CD8-positive, alpha-beta memory T cell (primary cell): ENCODE measurements at regions of chr5 and their contacts with region 1.

Region 1: GRCh38 chr5:137743031-137743640 is 7.2 kb upstream of the KLHL3 start:
- DNase-seq: peak; percentile 35 to 69 (median 53)
- H3K4me3 ChIP-seq: no peak overlapping the region
- H3K4me3 Mint-ChIP-seq: no peak overlapping the region
- H3K27ac ChIP-seq: no peak overlapping the region
- H3K27ac Mint-ChIP-seq: peak overlapping the region in 1 of 8 donors; percentile 24
- H3K4me1 ChIP-seq: peaks cover 6% of the 10 kb centered on the region
- H3K4me1 Mint-ChIP-seq: peaks cover 4 to 9% (median 9%) of the 10 kb centered on the region in 3 donors
- H3K27me3 ChIP-seq: no peaks in the 10 kb centered on the region
- H3K27me3 Mint-ChIP-seq: no peaks in the 10 kb centered on the region

Region 2: DNA sequence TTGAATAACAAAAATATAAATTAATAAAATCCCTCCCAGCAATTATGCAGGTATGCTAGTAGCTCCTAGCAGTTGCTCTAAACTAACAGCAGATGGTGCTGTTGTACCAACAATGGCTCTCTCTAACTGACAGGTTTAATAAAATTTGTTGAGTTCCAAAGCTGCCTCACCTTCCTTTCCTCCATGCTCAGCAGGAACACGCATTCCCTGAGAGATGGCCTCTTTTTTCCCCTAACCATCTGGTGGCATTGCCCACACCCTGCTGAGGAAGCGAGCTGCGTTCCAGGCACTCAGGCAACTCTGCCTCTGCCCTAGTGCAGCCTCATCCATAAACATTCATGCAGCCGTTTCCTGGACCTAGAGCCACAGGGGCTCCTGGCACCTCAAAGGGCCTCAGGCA is 113.5 kb before region 1 on chr5:
- CTCF ChIA-PET with region 1: interaction called, 65 read pairs
- POLR2A ChIA-PET with region 1: interaction called, 3 read pairs
- DNase-seq: peak in 2 of 5 donors; percentile 32 to 44
- H3K4me3 ChIP-seq: no peak overlapping the region
- H3K4me3 Mint-ChIP-seq: no peak overlapping the region
- H3K27ac ChIP-seq: no peak overlapping the region
- H3K27ac Mint-ChIP-seq: peak overlapping the region in 1 of 8 donors; percentile 39
- H3K4me1 ChIP-seq: no peaks in the 10 kb centered on the region
- H3K4me1 Mint-ChIP-seq: no peaks in the 10 kb centered on the region
- H3K27me3 ChIP-seq: no peaks in the 10 kb centered on the region
- H3K27me3 Mint-ChIP-seq: no peaks in the 10 kb centered on the region

Region 3: GRCh38 chr5:137641148-137641547 is 102.0 kb before region 1 on chr5:
- CTCF ChIA-PET with region 1: interaction called, 5 read pairs
- POLR2A ChIA-PET with region 1: interaction called, 11 read pairs
- DNase-seq: no peak
- H3K4me3 ChIP-seq: no peak overlapping the region
- H3K4me3 Mint-ChIP-seq: no peak overlapping the region
- H3K27ac ChIP-seq: no peak overlapping the region
- H3K27ac Mint-ChIP-seq: peak overlapping the region in 1 of 8 donors; percentile 87
- H3K4me1 ChIP-seq: no peaks in the 10 kb centered on the region
- H3K4me1 Mint-ChIP-seq: no peaks in the 10 kb centered on the region
- H3K27me3 ChIP-seq: no peaks in the 10 kb centered on the region
- H3K27me3 Mint-ChIP-seq: no peaks in the 10 kb centered on the region

Region 4: DNA sequence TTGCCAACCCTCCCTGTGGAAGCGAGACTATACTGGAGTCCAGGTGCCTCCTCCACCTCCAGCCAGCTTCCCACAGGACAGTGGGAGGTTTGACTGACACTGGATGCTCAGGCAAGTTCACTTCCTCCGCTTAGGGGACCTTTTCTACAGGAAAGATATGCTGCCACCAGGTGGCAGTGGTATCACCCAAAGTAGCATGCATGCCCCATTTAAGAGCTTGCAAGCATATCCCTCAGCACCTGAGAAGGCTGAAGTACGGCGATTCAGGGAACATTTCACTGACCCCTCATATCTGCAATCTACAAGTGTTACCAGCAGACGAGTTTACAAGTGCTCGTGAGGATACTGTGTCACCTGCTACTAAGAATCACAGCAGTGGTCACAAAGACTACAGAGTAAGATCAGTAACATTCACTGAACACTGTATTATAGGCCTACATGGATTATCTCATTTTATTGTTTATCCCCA is 82.8 kb before region 1 on chr5:
- CTCF ChIA-PET with region 1: interaction called, 170 read pairs
- POLR2A ChIA-PET with region 1: interaction called, 6 read pairs
- DNase-seq: peak; percentile 46 to 76 (median 47)
- H3K4me3 ChIP-seq: no peak overlapping the region
- H3K4me3 Mint-ChIP-seq: no peak overlapping the region
- H3K27ac ChIP-seq: no peak overlapping the region
- H3K27ac Mint-ChIP-seq: no peak overlapping the region
- H3K4me1 ChIP-seq: no peaks in the 10 kb centered on the region
- H3K4me1 Mint-ChIP-seq: peaks cover 3 to 7% (median 7%) of the 10 kb centered on the region in 3 donors
- H3K27me3 ChIP-seq: no peaks in the 10 kb centered on the region
- H3K27me3 Mint-ChIP-seq: no peaks in the 10 kb centered on the region

Region 5: DNA sequence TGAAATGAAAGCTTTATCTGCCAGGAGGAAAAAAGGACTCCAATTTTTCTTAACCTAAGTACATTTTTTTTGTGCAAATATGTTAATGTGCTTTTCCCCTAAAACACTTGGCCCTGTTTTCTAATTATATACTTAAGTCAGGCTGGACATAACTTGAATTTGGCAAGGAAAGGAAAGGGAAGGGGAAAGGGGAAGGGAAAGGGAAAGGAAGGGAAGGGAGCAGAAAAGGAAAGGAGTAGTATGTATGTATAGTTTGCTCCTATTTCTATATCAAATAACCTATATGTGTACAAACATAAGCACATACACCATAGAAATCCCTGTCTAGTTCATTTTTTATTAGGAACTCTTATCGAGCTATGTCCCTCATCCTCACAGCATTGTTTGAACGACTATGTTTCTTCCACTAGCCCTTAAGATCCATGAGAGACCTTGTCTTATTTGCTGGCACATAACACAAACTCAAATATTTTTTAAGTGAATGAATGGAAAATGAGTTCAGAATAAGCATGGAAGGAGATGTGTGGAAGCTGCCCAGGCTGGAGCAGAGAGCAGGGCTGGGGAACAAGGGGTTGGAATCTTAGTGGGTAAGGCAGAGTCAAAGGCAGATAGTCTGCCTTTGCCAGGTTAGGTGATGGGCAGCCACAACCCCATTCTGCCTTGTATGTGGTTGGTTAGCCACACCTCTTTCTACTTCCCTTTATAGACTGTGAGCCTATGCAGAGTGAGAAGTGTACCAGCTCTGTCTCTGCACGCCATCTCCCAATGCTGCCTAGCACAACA is 77.3 kb before region 1 on chr5:
- CTCF ChIA-PET with region 1: interaction called, 170 read pairs
- POLR2A ChIA-PET with region 1: interaction called, 6 read pairs
- DNase-seq: peak in 3 of 5 donors; percentile 26 to 53 (median 52)
- H3K4me3 ChIP-seq: no peak overlapping the region
- H3K4me3 Mint-ChIP-seq: no peak overlapping the region
- H3K27ac ChIP-seq: no peak overlapping the region
- H3K27ac Mint-ChIP-seq: peak overlapping the region in 4 of 8 donors; percentile 12 to 93 (median 67)
- H3K4me1 ChIP-seq: peaks cover 12% of the 10 kb centered on the region
- H3K4me1 Mint-ChIP-seq: peaks cover 11 to 15% (median 14%) of the 10 kb centered on the region in 3 donors
- H3K27me3 ChIP-seq: no peaks in the 10 kb centered on the region
- H3K27me3 Mint-ChIP-seq: no peaks in the 10 kb centered on the region

Region 6: GRCh38 chr5:137695651-137696428 is 47.3 kb before region 1 on chr5:
- CTCF ChIA-PET with region 1: interaction called, 33 read pairs
- POLR2A ChIA-PET with region 1: interaction called, 5 read pairs
- DNase-seq: peak in 2 of 5 donors; percentile 25 to 66
- H3K4me3 ChIP-seq: peak overlapping the region; percentile 7
- H3K4me3 Mint-ChIP-seq: peak overlapping the region in 6 of 7 donors; percentile 45 to 79 (median 64)
- H3K27ac ChIP-seq: no peak overlapping the region
- H3K27ac Mint-ChIP-seq: peak overlapping the region; percentile 73 to 96 (median 86)
- H3K4me1 ChIP-seq: peaks cover 43% of the 10 kb centered on the region
- H3K4me1 Mint-ChIP-seq: peaks cover 33 to 45% (median 34%) of the 10 kb centered on the region in 3 donors
- H3K27me3 ChIP-seq: no peaks in the 10 kb centered on the region
- H3K27me3 Mint-ChIP-seq: no peaks in the 10 kb centered on the region

Region 7: GRCh38 chr5:137754126-137754960 is 11.2 kb after region 1 on chr5 and contains the start of gene HNRNPA0:
- CTCF ChIA-PET with region 1: interaction called, 25 read pairs
- POLR2A ChIA-PET with region 1: interaction called, 9 read pairs
- DNase-seq: peak; percentile 95 to 99 (median 98)
- H3K4me3 ChIP-seq: peak within 1 kb of the TSS; percentile 98
- H3K4me3 Mint-ChIP-seq: peak within 1 kb of the TSS; percentile 97 to 100 (median 99)
- H3K27ac ChIP-seq: peak within 1 kb of the TSS; percentile 100
- H3K27ac Mint-ChIP-seq: peak within 1 kb of the TSS; percentile 99 to 100 (median 100)
- H3K4me1 ChIP-seq: peaks cover 29% of the 10 kb centered on the region
- H3K4me1 Mint-ChIP-seq: peaks cover 31 to 41% (median 38%) of the 10 kb centered on the region in 3 donors
- H3K27me3 ChIP-seq: no peaks in the 10 kb centered on the region
- H3K27me3 Mint-ChIP-seq: peaks cover 4 to 10% of the 10 kb centered on the region in 2 donors
- total RNA-seq, gene HNRNPA0: 42.7 to 45.9 TPM

Region 8: GRCh38 chr5:138844812-138845513 is 1101.8 kb after region 1 on chr5:
- CTCF ChIA-PET with region 1: no interaction called
- POLR2A ChIA-PET with region 1: no interaction called
- DNase-seq: no peak
- H3K4me3 ChIP-seq: no peak overlapping the region
- H3K4me3 Mint-ChIP-seq: no peak overlapping the region
- H3K27ac ChIP-seq: no peak overlapping the region
- H3K27ac Mint-ChIP-seq: no peak overlapping the region
- H3K4me1 ChIP-seq: no peaks in the 10 kb centered on the region
- H3K4me1 Mint-ChIP-seq: peaks cover 0 to 22% (median 6%) of the 10 kb centered on the region in 3 donors
- H3K27me3 ChIP-seq: no peaks in the 10 kb centered on the region
- H3K27me3 Mint-ChIP-seq: peaks cover 0 to 2% of the 10 kb centered on the region in 2 donors